ENCODE measurements at regions of chr5 and their contacts with region 1.

Region 1: GRCh38 chr5:17189381-17190036 is 27.9 kb upstream of the BASP1 start:
- DNase-seq: no peak
- H3K4me3 ChIP-seq: no peak overlapping the region
- H3K27ac ChIP-seq: no peak overlapping the region
- H3K4me1 ChIP-seq: peaks cover 16% of the 10 kb centered on the region
- H3K27me3 ChIP-seq: no peaks in the 10 kb centered on the region
- CTCF ChIP-seq: peak in 2 of 3 experiments; percentile 65 to 67
- POLR2A ChIP-seq: no peak

Region 2: GRCh38 chr5:16791036-16791705 is 398.3 kb before region 1 on chr5:
- intact Hi-C with region 1: loop called (anchors 5 kb)
- DNase-seq: no peak
- H3K4me3 ChIP-seq: no peak overlapping the region
- H3K27ac ChIP-seq: no peak overlapping the region
- H3K4me1 ChIP-seq: peaks cover 8% of the 10 kb centered on the region
- H3K27me3 ChIP-seq: no peaks in the 10 kb centered on the region
- CTCF ChIP-seq: peak; percentile 43 to 77 (median 72)
- POLR2A ChIP-seq: no peak

Region 3: DNA sequence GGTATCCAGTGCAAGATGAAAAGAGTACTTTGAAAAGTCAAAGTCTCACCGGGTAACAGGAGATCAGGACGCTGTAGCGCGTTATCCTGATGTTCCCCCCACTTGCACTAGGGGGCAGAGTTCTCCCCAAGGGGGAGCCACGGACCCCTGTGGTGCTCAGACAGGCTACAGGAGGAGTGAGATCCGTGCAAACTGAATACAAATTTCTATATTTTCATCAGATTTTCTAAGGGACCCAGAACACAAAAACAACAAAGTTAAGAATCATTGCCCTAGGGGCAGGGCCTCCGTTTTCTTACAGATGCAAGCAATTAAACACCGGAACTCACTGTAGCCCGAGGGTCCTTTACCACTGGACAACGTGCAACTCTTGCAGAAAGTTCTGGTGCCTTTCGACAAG is 255.4 kb before region 1 on chr5:
- intact Hi-C with region 1: loop called (anchors 10 kb)
- DNase-seq: no peak
- H3K4me3 ChIP-seq: peak overlapping the region; percentile 68 to 77
- H3K27ac ChIP-seq: no peak overlapping the region
- H3K4me1 ChIP-seq: peaks cover 27% of the 10 kb centered on the region
- H3K27me3 ChIP-seq: no peaks in the 10 kb centered on the region
- CTCF ChIP-seq: peak; percentile 27 to 73 (median 52)
- POLR2A ChIP-seq: no peak

Region 4: GRCh38 chr5:17269201-17269600 is 79.7 kb after region 1 on chr5:
- intact Hi-C with region 1: no loop called
- DNase-seq: no peak
- H3K4me3 ChIP-seq: no peak overlapping the region
- H3K27ac ChIP-seq: no peak overlapping the region
- H3K4me1 ChIP-seq: no peaks in the 10 kb centered on the region
- H3K27me3 ChIP-seq: no peaks in the 10 kb centered on the region
- CTCF ChIP-seq: no peak
- POLR2A ChIP-seq: no peak

Measured in vagina (tissue), 2 donors.